Left ventricle myocardium superior (tissue), 1 donor: ENCODE measurements at regions of chr11 and their contacts with region 1.

Region 1: DNA sequence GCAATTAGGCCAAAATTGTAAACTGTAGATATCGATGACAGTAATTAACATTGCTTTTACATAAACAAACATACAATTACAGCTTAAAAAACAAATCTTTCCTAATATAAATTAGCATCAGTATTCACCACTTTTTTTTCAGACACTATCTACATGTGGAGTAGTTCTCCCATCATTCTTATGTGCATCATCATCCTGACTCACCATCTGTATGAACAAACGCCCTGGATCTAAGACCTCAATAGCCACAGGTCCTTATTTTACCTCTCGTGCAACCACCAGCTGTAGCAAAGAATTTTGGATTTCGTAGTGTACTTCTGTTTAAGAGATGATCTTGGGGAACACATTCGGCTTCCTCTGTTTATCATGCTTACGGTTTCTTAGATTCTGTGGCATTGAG is 551.9 kb upstream of the KIRREL3 start:
- DNase-seq: no peak
- ATAC-seq: no peak

Region 2: GRCh38 chr11:127574478-127574877 is 22.0 kb after region 1 on chr11:
- intact Hi-C with region 1: loop called (anchors 2 kb)
- DNase-seq: no peak
- ATAC-seq: no peak

Region 3: DNA sequence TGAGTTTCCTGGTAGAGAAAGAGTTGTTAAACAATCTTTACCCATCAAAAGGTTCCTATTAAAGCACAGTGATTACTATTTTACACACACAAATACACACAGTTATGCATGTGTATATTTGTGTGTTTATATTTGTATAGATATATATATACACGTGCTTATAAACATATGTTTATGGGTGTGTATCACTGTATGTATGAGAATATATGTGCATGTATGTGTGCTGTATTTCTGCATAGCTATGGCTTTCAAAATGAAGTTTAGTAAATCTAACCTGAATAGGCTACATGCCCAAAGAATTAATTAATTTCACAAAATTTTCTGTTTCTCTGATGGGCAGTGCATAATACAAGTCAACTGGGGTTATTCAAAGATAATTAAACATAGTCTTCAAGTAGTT is 171.3 kb after region 1 on chr11:
- intact Hi-C with region 1: no loop called
- DNase-seq: no peak
- ATAC-seq: no peak